ENCODE measurements at regions of chr16 and their contacts with region 1.

Region 1: DNA sequence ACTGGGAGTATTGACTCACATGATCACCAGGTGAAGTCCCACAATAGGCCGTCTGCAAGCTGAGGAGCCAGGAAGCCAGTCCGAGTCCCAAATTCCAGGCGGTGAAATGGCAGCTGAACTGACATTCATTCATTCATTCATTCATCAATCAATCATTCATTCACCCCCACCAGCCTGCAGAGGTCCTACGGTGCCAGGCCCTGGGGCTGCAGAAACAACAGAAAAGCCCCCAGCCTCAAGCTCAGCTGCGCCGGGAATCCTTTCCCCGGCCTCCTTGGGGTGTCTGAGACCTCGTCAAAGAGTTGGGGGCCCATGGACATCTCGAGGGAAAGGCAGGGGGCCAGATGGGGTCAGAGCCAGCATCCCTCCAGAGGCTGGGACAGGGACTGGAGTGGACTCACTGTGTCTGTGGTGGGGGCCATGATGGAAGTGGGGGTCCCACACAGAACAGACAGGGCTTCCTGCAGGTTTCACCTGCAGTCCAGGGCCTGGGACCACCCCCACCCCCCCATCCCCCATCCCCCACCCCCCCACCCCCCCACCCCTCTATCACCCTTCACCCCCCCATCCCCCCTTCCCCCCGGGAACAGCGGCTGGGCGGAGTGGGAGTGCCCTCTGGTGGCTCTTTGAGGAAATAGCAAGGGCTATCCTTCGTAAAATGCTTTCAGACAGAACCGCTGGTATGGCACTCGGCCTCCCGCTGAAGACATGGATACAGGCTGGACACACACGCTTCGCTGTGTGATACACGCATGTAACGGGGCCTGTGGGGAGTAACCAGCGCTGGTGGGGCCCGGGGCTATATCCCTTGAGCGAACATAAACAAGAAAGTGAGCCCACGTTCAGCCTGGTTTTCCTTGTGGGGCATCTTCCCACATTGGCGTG is 8.5 kb upstream of the ZC3H18 start:
- DNase-seq: peak; percentile 69
- H3K4me3 ChIP-seq: peak overlapping the region; percentile 35
- H3K27ac ChIP-seq: no peak overlapping the region
- H3K4me1 ChIP-seq: peaks cover 3% of the 10 kb centered on the region
- H3K27me3 ChIP-seq: peaks cover 17% of the 10 kb centered on the region
- CTCF ChIP-seq: peak; percentile 68

Region 2: GRCh38 chr16:88442727-88443576 is 118.8 kb before region 1 on chr16:
- CTCF ChIA-PET with region 1: no interaction called
- POLR2A ChIA-PET with region 1: no interaction called
- intact Hi-C with region 1: loop called (anchors 1 kb)
- DNase-seq: peak; percentile 67
- H3K4me3 ChIP-seq: no peak overlapping the region
- H3K27ac ChIP-seq: no peak overlapping the region
- H3K4me1 ChIP-seq: peaks cover under 1% of the 10 kb centered on the region
- H3K27me3 ChIP-seq: no peaks in the 10 kb centered on the region
- CTCF ChIP-seq: peak; percentile 91

Region 3: GRCh38 chr16:88512728-88513696 is 48.7 kb before region 1 on chr16:
- CTCF ChIA-PET with region 1: interaction called, 11 read pairs
- POLR2A ChIA-PET with region 1: no interaction called
- intact Hi-C with region 1: no loop called
- DNase-seq: no peak
- H3K4me3 ChIP-seq: no peak overlapping the region
- H3K27ac ChIP-seq: no peak overlapping the region
- H3K4me1 ChIP-seq: peaks cover 18% of the 10 kb centered on the region
- H3K27me3 ChIP-seq: no peaks in the 10 kb centered on the region
- CTCF ChIP-seq: no peak

Measured in A673 (cell line).